ENCODE measurements at regions of chrX and their contacts with region 1.

Region 1: DNA sequence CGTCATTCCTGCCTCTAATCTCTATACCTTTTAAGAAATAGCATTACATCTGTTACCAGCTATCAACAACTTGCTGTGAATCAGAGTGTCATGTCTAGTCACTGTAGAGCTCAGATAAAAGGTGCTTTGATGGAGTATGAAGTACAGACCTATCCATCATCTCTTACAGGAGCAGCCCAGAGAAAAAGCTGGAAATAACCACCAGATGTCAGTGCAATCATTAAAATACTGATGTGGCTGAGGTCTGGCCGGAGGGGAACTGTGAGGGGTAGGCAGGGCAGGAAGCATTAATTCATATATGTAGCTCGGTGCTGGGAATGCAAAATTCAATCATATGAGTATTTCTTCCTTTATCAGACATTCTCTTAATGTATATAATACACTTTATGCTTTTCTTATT is 100.6 kb downstream of the AKAP4 start:
- DNase-seq: peak; percentile 44 to 52
- H3K4me3 ChIP-seq: no peak overlapping the region
- H3K4me3 Mint-ChIP-seq: no peak overlapping the region
- H3K27ac Mint-ChIP-seq: peak overlapping the region; percentile 75
- H3K4me1 ChIP-seq: peaks cover 8% of the 10 kb centered on the region; the same call in 1 of the 2 replicates
- H3K4me1 Mint-ChIP-seq: peaks cover 14% of the 10 kb centered on the region
- H3K27me3 ChIP-seq: no peaks in the 10 kb centered on the region
- H3K27me3 Mint-ChIP-seq: no peaks in the 10 kb centered on the region
- CTCF ChIP-seq: peak; percentile 38 to 47

Region 2: DNA sequence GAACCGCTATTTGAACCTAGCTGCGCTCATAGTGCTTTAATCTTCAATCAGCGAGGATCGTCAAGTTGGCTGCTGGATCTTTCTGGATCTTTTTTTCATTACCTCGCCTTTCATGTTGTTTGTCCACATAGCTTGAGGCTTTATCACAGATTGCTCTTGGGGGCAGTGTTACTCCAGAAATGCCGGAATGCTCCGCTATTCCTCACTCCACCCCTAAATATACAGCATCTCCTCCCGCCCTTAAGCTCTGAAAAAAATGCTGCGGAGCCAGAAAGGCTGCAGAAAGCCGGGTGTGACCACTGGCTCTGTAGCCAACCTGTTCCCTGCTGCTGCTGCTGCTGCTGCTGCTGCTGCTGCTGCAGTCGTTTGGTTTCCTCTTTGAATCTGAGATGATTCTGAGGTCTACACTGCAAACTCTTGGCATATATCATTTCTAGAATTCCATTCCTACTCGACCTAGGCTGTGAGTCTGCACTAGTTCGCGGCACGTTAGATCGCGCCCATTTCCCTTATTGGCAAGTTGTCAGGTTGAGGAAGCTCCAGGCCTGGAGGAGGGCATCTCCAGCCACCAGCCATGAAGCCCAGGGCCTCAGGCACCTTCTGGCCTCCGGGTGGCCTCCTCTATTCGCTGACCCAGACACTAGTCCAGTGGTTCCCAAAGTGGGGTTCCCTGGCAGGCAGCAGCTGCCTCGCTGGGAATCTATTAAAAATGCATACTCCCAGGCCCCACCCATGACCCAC is 1468.7 kb before region 1 on chrX:
- CTCF ChIA-PET with region 1: interaction called, 5 read pairs
- POLR2A ChIA-PET with region 1: no interaction called
- intact Hi-C with region 1: loop called (anchors 10 kb)
- DNase-seq: peak; percentile 90 to 92
- H3K4me3 ChIP-seq: no peak overlapping the region
- H3K4me3 Mint-ChIP-seq: peak overlapping the region; percentile 22
- H3K27ac Mint-ChIP-seq: peak overlapping the region; percentile 39
- H3K4me1 ChIP-seq: peaks cover 5% of the 10 kb centered on the region
- H3K4me1 Mint-ChIP-seq: no peaks in the 10 kb centered on the region
- H3K27me3 ChIP-seq: no peaks in the 10 kb centered on the region
- H3K27me3 Mint-ChIP-seq: no peaks in the 10 kb centered on the region
- CTCF ChIP-seq: peak; percentile 31 to 49

Region 3: GRCh38 chrX:49915361-49916222 is 184.6 kb before region 1 on chrX:
- CTCF ChIA-PET with region 1: interaction called, 4 read pairs
- POLR2A ChIA-PET with region 1: no interaction called
- intact Hi-C with region 1: loop called (anchors 1 kb)
- DNase-seq: peak; percentile 45 to 56
- H3K4me3 ChIP-seq: no peak overlapping the region
- H3K4me3 Mint-ChIP-seq: no peak overlapping the region
- H3K27ac Mint-ChIP-seq: no peak overlapping the region
- H3K4me1 ChIP-seq: peaks cover 4% of the 10 kb centered on the region; the same call in 1 of the 2 replicates
- H3K4me1 Mint-ChIP-seq: peaks cover 10% of the 10 kb centered on the region
- H3K27me3 ChIP-seq: no peaks in the 10 kb centered on the region
- H3K27me3 Mint-ChIP-seq: no peaks in the 10 kb centered on the region
- CTCF ChIP-seq: peak; percentile 62 to 80

Region 4: GRCh38 chrX:50081282-50081889 is 18.8 kb before region 1 on chrX:
- CTCF ChIA-PET with region 1: no interaction called
- POLR2A ChIA-PET with region 1: no interaction called
- intact Hi-C with region 1: no loop called
- DNase-seq: peak; percentile 53
- H3K4me3 ChIP-seq: no peak overlapping the region
- H3K4me3 Mint-ChIP-seq: no peak overlapping the region
- H3K27ac Mint-ChIP-seq: no peak overlapping the region
- H3K4me1 ChIP-seq: peaks cover under 1% of the 10 kb centered on the region; the same call in 1 of the 2 replicates
- H3K4me1 Mint-ChIP-seq: peaks cover 21% of the 10 kb centered on the region
- H3K27me3 ChIP-seq: no peaks in the 10 kb centered on the region
- H3K27me3 Mint-ChIP-seq: no peaks in the 10 kb centered on the region
- CTCF ChIP-seq: peak in 1 of 2 experiments; percentile 60

Region 5: GRCh38 chrX:50111742-50112141 is 11.6 kb after region 1 on chrX:
- CTCF ChIA-PET with region 1: no interaction called
- POLR2A ChIA-PET with region 1: no interaction called
- intact Hi-C with region 1: loop called (anchors 1 kb)
- DNase-seq: no peak
- H3K4me3 ChIP-seq: no peak overlapping the region
- H3K4me3 Mint-ChIP-seq: no peak overlapping the region
- H3K27ac Mint-ChIP-seq: peak overlapping the region; percentile 69
- H3K4me1 ChIP-seq: peaks cover 84% of the 10 kb centered on the region
- H3K4me1 Mint-ChIP-seq: peaks cover 17% of the 10 kb centered on the region
- H3K27me3 ChIP-seq: no peaks in the 10 kb centered on the region
- H3K27me3 Mint-ChIP-seq: no peaks in the 10 kb centered on the region
- CTCF ChIP-seq: no peak

Region 6: DNA sequence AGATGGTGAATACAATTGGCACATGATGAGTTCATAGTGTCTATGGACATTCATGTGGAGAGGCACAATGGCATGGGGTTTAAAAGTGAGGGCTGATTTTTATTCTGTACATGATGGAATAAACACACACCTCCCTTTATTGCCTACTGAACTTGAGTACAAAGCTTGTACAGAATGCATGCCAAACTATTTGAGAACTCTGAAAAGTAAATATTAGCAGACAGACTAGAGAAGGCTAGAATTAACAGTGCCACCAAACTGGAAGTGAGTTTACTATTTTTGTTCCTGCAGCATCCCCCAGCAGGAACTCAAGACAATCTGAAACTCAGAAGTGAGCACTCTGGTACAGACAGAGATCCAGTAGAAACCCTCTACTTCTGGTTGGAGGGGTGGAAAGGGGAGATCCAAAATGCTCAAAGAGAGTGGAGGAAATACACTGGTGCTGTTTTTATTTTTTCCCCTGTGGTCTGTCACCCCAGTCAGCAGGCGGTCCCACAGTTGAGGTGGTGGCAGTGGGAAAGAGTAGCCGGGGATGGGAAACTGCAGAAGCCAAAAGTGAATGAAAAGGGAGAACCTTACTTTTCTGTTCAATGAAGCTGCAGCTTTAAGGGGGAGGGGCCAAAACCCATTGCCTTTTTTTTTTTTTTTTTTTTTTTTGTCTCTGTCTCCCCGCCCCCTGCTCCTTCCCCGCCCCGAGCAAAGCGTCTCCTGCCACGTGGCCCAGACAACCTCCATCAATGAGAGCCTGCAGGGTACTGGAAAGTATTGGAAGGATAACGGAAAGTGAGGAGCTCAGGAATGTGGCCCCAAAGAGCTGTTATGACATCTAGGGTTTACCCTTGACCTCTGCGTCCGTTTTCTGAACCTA is 80.1 kb after region 1 on chrX:
- CTCF ChIA-PET with region 1: no interaction called
- POLR2A ChIA-PET with region 1: no interaction called
- intact Hi-C with region 1: no loop called
- DNase-seq: peak in 1 of 2 experiments; percentile 5
- H3K4me3 ChIP-seq: no peak overlapping the region
- H3K4me3 Mint-ChIP-seq: peak overlapping the region; percentile 0
- H3K27ac Mint-ChIP-seq: no peak overlapping the region
- H3K4me1 ChIP-seq: no peaks in the 10 kb centered on the region
- H3K4me1 Mint-ChIP-seq: peaks cover 8% of the 10 kb centered on the region
- H3K27me3 ChIP-seq: no peaks in the 10 kb centered on the region
- H3K27me3 Mint-ChIP-seq: no peaks in the 10 kb centered on the region
- CTCF ChIP-seq: no peak

Region 7: GRCh38 chrX:50281253-50281652 is 181.1 kb after region 1 on chrX:
- CTCF ChIA-PET with region 1: no interaction called
- POLR2A ChIA-PET with region 1: no interaction called
- intact Hi-C with region 1: no loop called
- DNase-seq: no peak
- H3K4me3 ChIP-seq: no peak overlapping the region
- H3K4me3 Mint-ChIP-seq: no peak overlapping the region
- H3K27ac Mint-ChIP-seq: no peak overlapping the region
- H3K4me1 ChIP-seq: no peaks in the 10 kb centered on the region
- H3K4me1 Mint-ChIP-seq: no peaks in the 10 kb centered on the region
- H3K27me3 ChIP-seq: no peaks in the 10 kb centered on the region
- H3K27me3 Mint-ChIP-seq: no peaks in the 10 kb centered on the region
- CTCF ChIP-seq: no peak

Region 8: GRCh38 chrX:50432829-50433289 is 332.7 kb after region 1 on chrX:
- CTCF ChIA-PET with region 1: no interaction called
- POLR2A ChIA-PET with region 1: no interaction called
- intact Hi-C with region 1: no loop called
- DNase-seq: no peak
- H3K4me3 ChIP-seq: no peak overlapping the region
- H3K4me3 Mint-ChIP-seq: no peak overlapping the region
- H3K27ac Mint-ChIP-seq: no peak overlapping the region
- H3K4me1 ChIP-seq: peaks cover 6% of the 10 kb centered on the region; the same call in 1 of the 2 replicates
- H3K4me1 Mint-ChIP-seq: peaks cover 11% of the 10 kb centered on the region
- H3K27me3 ChIP-seq: no peaks in the 10 kb centered on the region
- H3K27me3 Mint-ChIP-seq: no peaks in the 10 kb centered on the region
- CTCF ChIP-seq: no peak

Region 9: DNA sequence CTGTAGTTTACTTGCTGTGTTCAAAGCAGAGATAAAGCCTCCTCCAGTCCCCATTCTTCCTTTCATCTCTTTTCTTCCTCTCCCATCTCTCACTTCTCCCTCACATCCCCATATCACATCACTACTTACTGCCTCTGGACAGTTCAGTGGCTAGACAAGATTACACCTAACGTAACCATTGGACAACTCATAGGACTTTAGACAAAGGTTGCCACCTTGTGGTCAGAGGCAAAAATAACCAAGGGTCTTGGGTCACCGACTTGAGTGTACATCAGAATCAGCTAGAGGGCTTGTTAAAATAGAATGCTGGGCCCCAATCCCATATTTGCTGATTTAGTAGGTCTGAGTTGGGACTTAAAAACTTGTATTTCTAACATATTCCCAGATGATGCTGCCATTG is 479.8 kb after region 1 on chrX:
- CTCF ChIA-PET with region 1: interaction called, 5 read pairs
- POLR2A ChIA-PET with region 1: no interaction called
- intact Hi-C with region 1: loop called (anchors 1 kb)
- DNase-seq: peak; percentile 50
- H3K4me3 ChIP-seq: no peak overlapping the region
- H3K4me3 Mint-ChIP-seq: no peak overlapping the region
- H3K27ac Mint-ChIP-seq: no peak overlapping the region
- H3K4me1 ChIP-seq: no peaks in the 10 kb centered on the region
- H3K4me1 Mint-ChIP-seq: peaks cover 6% of the 10 kb centered on the region
- H3K27me3 ChIP-seq: no peaks in the 10 kb centered on the region
- H3K27me3 Mint-ChIP-seq: no peaks in the 10 kb centered on the region
- CTCF ChIP-seq: peak; percentile 36 to 45

Measured in Caco-2 (cell line).